ENCODE measurements at regions of chr21 and their contacts with region 1.

Region 1: DNA sequence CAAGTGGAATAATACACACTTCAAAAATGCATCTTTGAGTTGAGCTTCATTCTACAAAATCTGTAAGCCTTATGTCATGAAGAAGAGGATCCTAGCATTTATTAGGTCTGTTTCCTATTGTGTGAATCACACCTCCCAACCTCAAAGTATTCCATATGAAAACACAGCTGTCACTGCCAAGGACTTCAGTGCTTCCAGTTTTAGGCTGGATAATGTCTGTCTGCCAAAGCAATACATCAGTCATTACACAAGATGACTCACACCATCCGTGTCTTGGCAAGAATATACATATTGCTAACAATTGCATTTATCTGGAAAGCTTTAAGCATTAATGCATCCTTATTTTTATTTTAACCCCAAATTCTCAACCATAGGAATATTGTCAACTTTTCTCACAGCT is 125.7 kb upstream of the TMPRSS15 start:
- DNase-seq: peak; percentile 89
- ATAC-seq: peak; percentile 98
- H3K4me3 ChIP-seq: no peak overlapping the region
- H3K27ac ChIP-seq: no peak overlapping the region
- H3K4me1 ChIP-seq: peaks cover 8% of the 10 kb centered on the region; the same call in 1 of the 2 replicates
- H3K27me3 ChIP-seq: no peaks in the 10 kb centered on the region
- CTCF ChIP-seq: no peak

Region 2: DNA sequence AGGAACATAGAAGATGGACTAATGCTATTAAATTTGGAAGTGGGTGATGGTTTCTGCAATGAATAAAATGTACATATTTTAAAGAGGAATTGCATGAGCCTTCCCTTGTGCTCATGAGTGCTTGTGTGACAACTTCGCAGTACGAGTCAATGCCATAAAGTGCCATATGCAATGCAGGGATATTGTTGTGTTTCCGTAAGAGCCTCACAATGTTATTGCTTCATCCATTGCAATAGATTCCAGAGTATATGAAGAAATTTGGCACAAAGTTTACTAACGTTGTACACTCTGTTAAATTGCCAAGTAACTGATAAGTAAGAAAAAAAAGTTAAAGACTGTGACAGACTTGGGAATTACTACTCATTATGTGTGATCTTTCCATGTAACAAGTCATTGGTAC is 938.8 kb before region 1 on chr21:
- CTCF ChIA-PET with region 1: no interaction called
- POLR2A ChIA-PET with region 1: no interaction called
- intact Hi-C with region 1: no loop called
- DNase-seq: no peak
- ATAC-seq: no peak
- H3K4me3 ChIP-seq: no peak overlapping the region
- H3K27ac ChIP-seq: no peak overlapping the region
- H3K4me1 ChIP-seq: no peaks in the 10 kb centered on the region
- H3K27me3 ChIP-seq: no peaks in the 10 kb centered on the region
- CTCF ChIP-seq: no peak

Region 3: GRCh38 chr21:18603261-18603660 is 74.0 kb after region 1 on chr21:
- CTCF ChIA-PET with region 1: no interaction called
- POLR2A ChIA-PET with region 1: no interaction called
- intact Hi-C with region 1: loop called (anchors 10 kb)
- DNase-seq: no peak
- ATAC-seq: no peak
- H3K4me3 ChIP-seq: no peak overlapping the region
- H3K27ac ChIP-seq: no peak overlapping the region
- H3K4me1 ChIP-seq: no peaks in the 10 kb centered on the region
- H3K27me3 ChIP-seq: no peaks in the 10 kb centered on the region
- CTCF ChIP-seq: no peak